CD14-positive monocyte (primary cell): ENCODE measurements at regions of chr17 and their contacts with region 1.

Region 1: GRCh38 chr17:17591355-17592298 is at the start of gene PEMT:
- DNase-seq: peak; percentile 96 to 97 (median 97)
- H3K4me3 ChIP-seq: peak within 1 kb of the TSS; percentile 82 to 96 (median 95)
- H3K4me3 Mint-ChIP-seq: peak within 1 kb of the TSS; percentile 85 to 96
- H3K27ac ChIP-seq: peak within 1 kb of the TSS; percentile 64 to 88
- H3K27ac Mint-ChIP-seq: peak within 1 kb of the TSS; percentile 91 to 96 (median 93)
- H3K4me1 ChIP-seq: peaks cover 27 to 34% of the 10 kb centered on the region in 2 donors
- H3K4me1 Mint-ChIP-seq: peaks cover 30% of the 10 kb centered on the region
- H3K27me3 ChIP-seq: no peaks in the 10 kb centered on the region
- H3K27me3 Mint-ChIP-seq: peaks cover 0 to 2% (median 0%) of the 10 kb centered on the region in 3 donors
- CTCF ChIP-seq: no peak
- polyA plus RNA-seq, gene PEMT: 26.7 to 41.0 (median 38.4) TPM

Region 2: GRCh38 chr17:17476865-17477467 is 114.7 kb before region 1 on chr17 and contains the start of gene MED9:
- intact Hi-C with region 1: loop called in 1 of 2 experiments (anchors 5 kb)
- DNase-seq: peak; percentile 84 to 93 (median 91)
- H3K4me3 ChIP-seq: peak within 1 kb of the TSS; percentile 66 to 95 (median 94)
- H3K4me3 Mint-ChIP-seq: peak within 1 kb of the TSS; percentile 87 to 91
- H3K27ac ChIP-seq: peak within 1 kb of the TSS; percentile 58 to 93
- H3K27ac Mint-ChIP-seq: peak within 1 kb of the TSS; percentile 90 to 94 (median 91)
- H3K4me1 ChIP-seq: peaks cover 11 to 19% of the 10 kb centered on the region in 2 donors
- H3K4me1 Mint-ChIP-seq: peaks cover 30% of the 10 kb centered on the region
- H3K27me3 ChIP-seq: no peaks in the 10 kb centered on the region
- H3K27me3 Mint-ChIP-seq: peaks cover 1 to 3% (median 2%) of the 10 kb centered on the region in 3 donors
- CTCF ChIP-seq: no peak
- polyA plus RNA-seq, gene MED9: 5.6 to 6.9 (median 6.1) TPM

Region 3: DNA sequence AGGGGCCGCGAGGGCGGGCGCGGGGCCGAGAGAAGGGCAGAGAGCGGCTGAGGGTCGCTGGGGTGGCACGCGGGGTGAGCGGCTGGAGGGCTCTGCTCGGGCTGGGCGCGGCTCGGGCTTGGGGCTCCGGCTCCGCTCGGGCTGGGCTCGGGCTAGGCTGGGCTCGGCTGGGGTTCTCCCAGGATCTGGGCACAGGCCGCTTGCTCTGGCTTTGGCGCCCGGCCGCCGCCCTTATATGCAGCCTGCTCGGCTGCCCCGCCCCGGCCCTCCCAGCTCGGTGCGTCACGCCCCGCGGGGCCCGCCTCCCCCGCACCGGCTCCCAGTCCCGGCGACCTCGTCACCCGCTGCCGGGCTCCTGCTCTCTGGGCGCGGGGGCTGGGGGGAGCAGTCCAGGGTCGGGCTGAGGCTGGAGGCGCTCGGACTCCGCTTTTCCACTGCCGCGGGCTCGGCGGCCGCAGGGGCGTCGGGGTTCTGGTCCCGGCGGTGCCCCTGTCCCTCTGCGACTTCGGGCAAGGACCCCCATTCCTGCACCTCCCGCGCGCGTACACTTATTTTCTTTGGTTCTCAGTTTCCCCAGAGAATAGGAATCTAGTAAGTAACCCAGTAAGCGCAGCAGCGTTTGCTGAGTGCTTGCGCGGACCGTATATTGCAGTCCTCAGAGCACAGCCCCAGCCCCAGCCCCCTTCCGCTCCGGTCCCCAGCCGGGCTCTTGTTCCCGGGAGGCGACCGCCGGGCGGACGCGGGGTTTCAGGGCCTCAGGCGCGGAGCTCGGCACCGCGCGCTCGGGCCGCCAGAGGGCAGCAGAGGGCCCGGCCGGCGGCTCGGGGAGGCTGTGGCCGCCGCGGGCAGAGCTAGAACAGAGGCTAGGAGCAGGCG is 95.2 kb before region 1 on chr17 and contains the start of gene RASD1:
- intact Hi-C with region 1: loop called in 1 of 2 experiments (anchors 2 kb)
- DNase-seq: peak; percentile 80 to 88 (median 85)
- H3K4me3 ChIP-seq: peak within 1 kb of the TSS; percentile 52 to 90 (median 75)
- H3K4me3 Mint-ChIP-seq: peak within 1 kb of the TSS; percentile 88 to 97
- H3K27ac ChIP-seq: peak within 1 kb of the TSS; percentile 54 to 80
- H3K27ac Mint-ChIP-seq: peak within 1 kb of the TSS in 6 of 7 donors; percentile 25 to 90 (median 72)
- H3K4me1 ChIP-seq: peaks cover 21 to 30% of the 10 kb centered on the region in 2 donors
- H3K4me1 Mint-ChIP-seq: peaks cover 20% of the 10 kb centered on the region
- H3K27me3 ChIP-seq: peaks cover 6 to 34% of the 10 kb centered on the region in 2 donors
- H3K27me3 Mint-ChIP-seq: peaks cover 31 to 41% (median 37%) of the 10 kb centered on the region in 3 donors
- CTCF ChIP-seq: peak; percentile 97
- polyA plus RNA-seq, gene RASD1: 0.88 to 12.4 (median 1.3) TPM

Region 4: DNA sequence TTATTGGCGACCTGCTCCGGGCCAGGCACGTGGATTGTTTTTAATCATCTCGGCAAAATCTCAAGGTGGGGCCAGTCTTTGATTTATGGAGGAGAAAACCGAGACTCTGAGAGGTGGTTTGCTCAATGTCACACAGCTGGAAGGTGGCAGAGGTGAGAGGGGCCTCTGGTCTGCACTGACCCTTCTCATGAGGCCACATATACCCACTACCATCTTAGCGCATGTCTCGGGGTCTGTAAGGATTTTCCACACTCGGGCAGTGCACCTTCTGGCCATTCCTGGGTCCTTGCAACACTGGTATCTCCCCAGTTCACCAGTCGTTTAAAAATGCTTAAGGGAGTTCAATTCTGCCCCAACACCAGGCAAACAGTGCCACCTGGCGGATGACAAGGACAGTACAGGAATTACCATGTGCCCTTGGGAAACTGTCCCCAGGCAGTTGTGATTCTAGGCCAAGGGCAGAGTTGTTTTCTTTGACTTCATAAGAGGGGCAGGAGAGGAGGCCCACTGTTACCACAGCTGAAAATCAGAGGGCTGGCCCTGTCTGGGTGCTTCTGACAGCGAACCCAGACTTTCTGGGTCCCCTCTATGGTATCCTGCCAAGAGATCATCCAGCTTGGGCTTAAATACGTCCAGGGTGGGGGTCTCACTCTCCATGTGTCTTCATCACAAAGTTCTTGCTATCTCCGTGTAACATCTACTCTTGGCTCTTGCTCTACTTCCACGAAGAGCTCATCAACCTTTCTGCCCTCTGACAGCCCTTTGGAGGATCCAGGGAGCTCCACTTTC is 50.2 kb after region 1 on chr17:
- intact Hi-C with region 1: loop called in 1 of 2 experiments (anchors 5 kb)
- DNase-seq: peak; percentile 75 to 83 (median 77)
- H3K4me3 ChIP-seq: no peak overlapping the region
- H3K4me3 Mint-ChIP-seq: no peak overlapping the region
- H3K27ac ChIP-seq: no peak overlapping the region
- H3K27ac Mint-ChIP-seq: peak overlapping the region in 4 of 7 donors; percentile 24 to 81 (median 48)
- H3K4me1 ChIP-seq: peaks cover 41 to 48% of the 10 kb centered on the region in 2 donors
- H3K4me1 Mint-ChIP-seq: peaks cover 43% of the 10 kb centered on the region
- H3K27me3 ChIP-seq: no peaks in the 10 kb centered on the region
- H3K27me3 Mint-ChIP-seq: peaks cover 0 to 3% (median 2%) of the 10 kb centered on the region in 3 donors
- CTCF ChIP-seq: peak; percentile 82

Region 5: DNA sequence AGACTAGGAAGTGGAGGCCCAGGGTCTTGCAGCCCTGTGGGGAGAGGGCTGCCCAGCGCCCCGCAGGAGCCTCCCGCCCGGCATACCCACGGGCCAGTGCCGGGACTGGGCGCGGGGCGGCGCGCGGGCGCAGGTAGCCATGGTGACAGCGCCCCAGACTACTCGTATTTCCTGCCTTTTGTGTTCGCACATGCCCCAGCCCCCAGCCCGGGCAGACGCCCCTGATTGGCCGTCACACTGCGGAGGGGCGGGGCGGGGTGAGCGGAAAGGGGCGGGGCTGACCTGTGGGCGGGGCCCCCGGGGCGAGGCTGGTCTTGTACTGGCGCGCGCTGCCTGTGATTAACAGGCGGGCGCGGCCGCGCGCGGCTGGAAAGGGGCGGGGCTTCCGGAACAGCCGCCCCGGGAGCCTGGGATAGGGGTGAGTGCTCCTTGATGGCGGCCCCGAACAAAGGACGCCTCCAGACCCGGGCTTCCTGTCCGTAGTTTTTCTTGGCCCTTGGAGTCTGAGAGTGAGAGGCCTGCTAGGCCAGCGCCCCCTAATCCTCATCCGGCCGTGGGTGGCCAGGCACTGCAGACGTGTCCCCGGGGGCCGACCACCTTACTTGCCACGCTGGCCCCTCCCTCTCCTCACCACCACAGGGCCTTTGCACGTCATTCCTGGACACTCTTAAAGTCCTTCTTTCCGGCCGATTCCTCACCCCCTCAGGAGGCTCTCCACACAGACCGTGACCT is 160.6 kb after region 1 on chr17:
- intact Hi-C with region 1: loop called in 1 of 2 experiments (anchors 5 kb)
- DNase-seq: peak; percentile 94 to 97 (median 94)
- H3K4me3 ChIP-seq: peak overlapping the region; percentile 70 to 79 (median 71)
- H3K4me3 Mint-ChIP-seq: peak overlapping the region; percentile 81 to 89
- H3K27ac ChIP-seq: peak overlapping the region; percentile 72 to 86
- H3K27ac Mint-ChIP-seq: peak overlapping the region; percentile 95 to 98 (median 97)
- H3K4me1 ChIP-seq: peaks cover 42 to 49% of the 10 kb centered on the region in 2 donors
- H3K4me1 Mint-ChIP-seq: peaks cover 45% of the 10 kb centered on the region
- H3K27me3 ChIP-seq: no peaks in the 10 kb centered on the region
- H3K27me3 Mint-ChIP-seq: peaks cover 3 to 7% (median 4%) of the 10 kb centered on the region in 3 donors
- CTCF ChIP-seq: peak; percentile 40